Heart right ventricle (tissue), 16 donors: ENCODE measurements at regions of chr9 and their contacts with region 1.

Region 1: DNA sequence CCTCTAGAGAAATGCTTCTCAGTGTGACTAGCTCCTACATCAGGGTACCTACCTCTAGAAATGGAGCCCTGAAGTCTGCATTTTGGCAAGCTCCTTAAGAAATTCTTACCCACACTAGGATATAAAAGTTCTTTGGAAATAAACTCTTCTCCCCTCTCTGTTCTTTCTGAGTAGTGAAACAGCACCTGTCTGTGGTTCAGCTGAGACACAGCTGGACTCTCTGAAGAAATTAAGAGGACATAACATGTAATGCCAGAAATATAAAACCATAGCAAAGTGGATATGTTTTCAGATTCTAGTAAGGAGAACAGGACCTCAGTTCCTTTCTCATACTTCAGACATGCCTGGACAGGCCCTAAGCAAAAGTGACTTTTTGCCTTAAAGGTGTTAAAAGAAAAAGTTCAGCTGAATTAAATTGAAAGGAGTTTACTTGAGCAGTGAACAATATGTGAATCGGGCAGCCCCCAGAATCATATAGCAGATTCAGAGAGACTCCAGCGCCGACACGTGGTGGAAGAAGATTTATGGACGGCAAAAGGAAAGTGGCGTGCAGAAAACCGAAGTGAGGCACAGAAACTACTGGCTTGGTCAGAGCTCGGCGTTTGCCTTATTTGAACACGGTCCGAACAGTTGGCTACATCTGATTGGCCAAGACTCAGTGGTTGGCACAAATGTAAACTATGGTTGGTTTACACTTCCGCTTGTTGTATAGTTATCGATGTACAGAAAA is 64.5 kb downstream of the PRKACG start:
- DNase-seq: peak in 1 of 2 donors; percentile 23
- ATAC-seq: peak in 4 of 8 donors; percentile 30 to 41 (median 38)
- H3K4me3 ChIP-seq: no peak overlapping the region
- H3K27ac ChIP-seq: peak overlapping the region in 2 of 10 donors; percentile 12 to 36
- H3K4me1 ChIP-seq: peaks cover 0 to 15% (median 0%) of the 10 kb centered on the region in 9 donors
- H3K27me3 ChIP-seq: no peaks in the 10 kb centered on the region
- CTCF ChIP-seq: peak in 6 of 9 donors; percentile 11 to 39 (median 19)

Region 2: GRCh38 chr9:68619636-68620035 is 329.8 kb before region 1 on chr9:
- intact Hi-C with region 1: no loop called
- DNase-seq: no peak
- ATAC-seq: no peak
- H3K4me3 ChIP-seq: no peak overlapping the region
- H3K27ac ChIP-seq: no peak overlapping the region
- H3K4me1 ChIP-seq: no peaks in the 10 kb centered on the region
- H3K27me3 ChIP-seq: no peaks in the 10 kb centered on the region
- CTCF ChIP-seq: no peak

Region 3: DNA sequence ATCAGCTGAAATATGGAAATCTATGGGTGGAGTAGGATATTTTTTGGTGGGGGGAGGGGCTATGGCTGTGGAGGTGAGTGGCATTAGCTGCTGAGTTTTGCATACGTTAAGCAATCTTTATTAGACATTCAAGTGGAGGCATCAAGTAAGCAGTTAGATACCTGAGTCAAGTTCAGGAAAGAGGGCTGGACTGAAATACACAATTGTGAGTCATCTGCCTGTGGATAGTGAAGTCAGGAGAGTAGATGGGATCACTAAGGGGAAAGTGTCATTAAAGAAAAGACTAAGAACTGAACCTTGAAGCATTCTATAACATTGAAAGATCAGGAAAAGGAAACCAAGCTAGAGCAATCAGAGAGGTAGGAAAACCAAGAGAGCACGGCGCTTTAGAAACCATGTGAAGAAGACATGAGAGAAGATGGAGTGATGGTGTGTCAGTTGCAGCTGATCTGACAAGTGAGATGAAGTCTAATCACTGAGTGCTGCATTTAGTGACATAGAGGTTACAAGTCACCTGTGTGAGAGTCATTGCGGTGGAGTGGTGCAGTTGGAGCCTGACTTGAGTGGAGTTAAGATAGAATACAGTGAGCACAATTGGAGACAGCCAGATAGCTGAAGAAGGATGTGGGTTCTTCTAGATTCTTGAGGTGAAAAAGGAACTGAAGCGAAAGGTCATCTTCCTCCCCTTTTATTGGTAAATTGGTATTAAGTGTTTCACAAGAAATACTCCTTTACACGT is 155.7 kb before region 1 on chr9:
- intact Hi-C with region 1: no loop called
- DNase-seq: no peak
- ATAC-seq: no peak
- H3K4me3 ChIP-seq: no peak overlapping the region
- H3K27ac ChIP-seq: no peak overlapping the region
- H3K4me1 ChIP-seq: peaks cover 0 to 39% (median 12%) of the 10 kb centered on the region in 9 donors
- H3K27me3 ChIP-seq: no peaks in the 10 kb centered on the region
- CTCF ChIP-seq: no peak

Region 4: DNA sequence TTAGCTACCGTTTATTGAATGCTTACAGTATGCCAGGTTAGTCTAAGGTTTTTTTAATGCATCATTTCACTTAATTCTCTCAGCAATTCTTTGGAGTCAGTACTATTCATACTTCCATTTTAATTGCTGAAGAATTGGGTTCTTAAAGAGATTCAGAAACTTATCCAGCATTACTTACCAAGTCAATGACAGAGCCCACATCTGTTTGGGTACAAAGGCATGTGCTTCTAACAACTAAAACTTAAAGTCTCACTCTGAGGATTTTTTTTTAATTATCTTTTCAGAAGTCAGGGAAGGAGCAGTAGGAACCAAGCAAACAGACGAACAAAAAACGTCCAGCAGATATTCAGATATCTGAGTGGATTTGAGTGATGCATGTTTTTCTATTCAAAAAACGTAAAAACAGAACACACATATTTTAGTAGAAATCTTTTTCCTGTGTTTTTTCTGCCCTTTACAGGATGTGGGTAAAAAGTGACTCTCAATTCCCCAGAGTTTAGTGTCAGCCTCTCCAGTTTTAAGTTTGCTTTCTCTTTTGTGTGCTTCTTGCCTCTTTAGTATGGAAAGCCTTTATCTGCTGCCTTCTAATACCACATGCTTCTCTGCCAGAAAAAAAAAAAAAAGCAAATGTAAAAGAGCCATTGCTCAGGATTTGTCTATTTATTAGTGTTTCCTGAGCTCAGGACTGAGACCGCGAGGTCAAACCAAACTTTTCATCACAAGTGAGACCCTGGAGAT is 53.5 kb before region 1 on chr9:
- intact Hi-C with region 1: loop called in 1 of 10 experiments (anchors 10 kb)
- DNase-seq: no peak
- ATAC-seq: peak in 7 of 8 donors; percentile 60 to 80 (median 63)
- H3K4me3 ChIP-seq: peak overlapping the region in 4 of 10 donors; percentile 4 to 26 (median 10)
- H3K27ac ChIP-seq: peak overlapping the region in 9 of 10 donors; percentile 13 to 67 (median 49)
- H3K4me1 ChIP-seq: peaks cover 0 to 61% (median 32%) of the 10 kb centered on the region in 9 donors
- H3K27me3 ChIP-seq: no peaks in the 10 kb centered on the region
- CTCF ChIP-seq: no peak

Region 5: DNA sequence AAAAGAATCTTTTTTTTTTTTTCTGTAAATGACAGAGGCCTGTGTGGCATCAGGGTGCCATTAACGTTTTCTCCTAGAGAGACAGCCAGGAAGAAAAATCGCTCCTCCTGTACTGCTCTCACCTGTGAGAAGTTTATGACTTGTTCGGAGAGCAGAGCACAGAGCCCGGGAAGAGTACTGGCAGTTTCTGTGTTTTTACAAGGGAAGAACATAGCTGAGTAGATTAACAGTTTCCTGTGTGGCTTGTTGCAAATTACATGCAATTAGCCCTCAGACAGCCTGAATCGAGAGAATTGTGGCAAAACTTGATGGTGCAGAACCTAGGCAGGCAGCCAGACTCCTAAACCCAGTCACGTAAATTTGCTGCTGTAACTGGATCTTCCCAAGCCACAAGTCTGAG is 32.4 kb after region 1 on chr9:
- intact Hi-C with region 1: no loop called
- DNase-seq: no peak
- ATAC-seq: no peak
- H3K4me3 ChIP-seq: no peak overlapping the region
- H3K27ac ChIP-seq: peak overlapping the region; percentile 28 to 89 (median 78)
- H3K4me1 ChIP-seq: peaks cover 6 to 58% (median 40%) of the 10 kb centered on the region in 9 donors
- H3K27me3 ChIP-seq: no peaks in the 10 kb centered on the region
- CTCF ChIP-seq: no peak

Region 6: GRCh38 chr9:69136779-69137178 is 187.3 kb after region 1 on chr9:
- intact Hi-C with region 1: no loop called
- DNase-seq: peak in 1 of 2 donors; percentile 15
- ATAC-seq: peak in 6 of 8 donors; percentile 18 to 59 (median 34)
- H3K4me3 ChIP-seq: no peak overlapping the region
- H3K27ac ChIP-seq: peak overlapping the region in 9 of 10 donors; percentile 2 to 78 (median 47)
- H3K4me1 ChIP-seq: peaks cover 5 to 61% (median 16%) of the 10 kb centered on the region in 9 donors
- H3K27me3 ChIP-seq: no peaks in the 10 kb centered on the region
- CTCF ChIP-seq: no peak